ENCODE measurements at regions of chr2 and their contacts with region 1.

Region 1: GRCh38 chr2:188971432-188971861 is 2.7 kb upstream of the COL3A1 start:
- DNase-seq: no peak
- H3K4me3 ChIP-seq: no peak overlapping the region
- H3K27ac ChIP-seq: no peak overlapping the region
- H3K4me1 ChIP-seq: no peaks in the 10 kb centered on the region
- H3K27me3 ChIP-seq: no peaks in the 10 kb centered on the region
- CTCF ChIP-seq: no peak
- EP300 ChIP-seq: no peak
- POLR2A ChIP-seq: no peak
- RAD21 ChIP-seq: no peak

Region 2: GRCh38 chr2:188983427-188984064 is 12.1 kb after region 1 on chr2:
- CTCF ChIA-PET with region 1: interaction called, 15 read pairs
- POLR2A ChIA-PET with region 1: no interaction called
- DNase-seq: no peak
- H3K4me3 ChIP-seq: no peak overlapping the region
- H3K27ac ChIP-seq: no peak overlapping the region
- H3K4me1 ChIP-seq: no peaks in the 10 kb centered on the region
- H3K27me3 ChIP-seq: no peaks in the 10 kb centered on the region
- CTCF ChIP-seq: peak in 2 of 3 experiments; percentile 33 to 42; a peak in 2 of 4 replicates
- EP300 ChIP-seq: no peak
- POLR2A ChIP-seq: no peak
- RAD21 ChIP-seq: peak; percentile 16 to 40; a peak in 2 of 4 replicates

Measured in H1 (cell line).